Dendritic cell treated with granulocyte-macrophage colony-stimulating factor and Interleukin-4, amounts not matched to agents 40 ng/mL and 50 ng/mL, for 4 days (primary cell): ENCODE measurements at regions of chr6 and their contacts with region 1.

Region 1: DNA sequence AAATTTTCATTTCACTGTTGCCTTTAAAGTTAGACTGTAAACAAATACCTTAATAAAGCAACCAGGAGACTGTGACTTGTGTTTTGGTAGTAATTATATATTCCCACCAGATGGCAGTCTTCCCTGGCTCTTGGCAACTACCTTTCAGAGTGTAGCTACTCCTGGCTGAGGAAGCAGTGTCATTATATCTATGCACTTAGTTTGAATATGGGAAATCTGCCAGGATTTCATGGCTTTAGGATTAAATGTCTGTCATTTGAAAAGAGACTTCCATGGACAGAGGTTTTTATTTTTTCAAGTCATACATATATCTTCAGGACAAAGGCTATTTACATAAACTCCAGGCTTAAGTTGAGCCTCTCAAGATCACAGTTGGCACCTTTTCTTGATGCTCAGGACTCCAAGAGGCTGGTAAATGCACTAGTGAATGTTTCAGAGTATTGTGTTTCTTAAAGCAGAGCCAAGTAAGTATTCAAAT is 160.1 kb downstream of the C6orf58 start:
- H3K4me3 Mint-ChIP-seq: no peak overlapping the region
- H3K27ac Mint-ChIP-seq: no peak overlapping the region
- H3K4me1 Mint-ChIP-seq: no peaks in the 10 kb centered on the region
- H3K27me3 Mint-ChIP-seq: no peaks in the 10 kb centered on the region

Region 2: GRCh38 chr6:127403636-127404035 is 333.4 kb before region 1 on chr6:
- intact Hi-C with region 1: no loop called
- H3K4me3 Mint-ChIP-seq: no peak overlapping the region
- H3K27ac Mint-ChIP-seq: no peak overlapping the region
- H3K4me1 Mint-ChIP-seq: peaks cover 10% of the 10 kb centered on the region
- H3K27me3 Mint-ChIP-seq: no peaks in the 10 kb centered on the region

Region 3: DNA sequence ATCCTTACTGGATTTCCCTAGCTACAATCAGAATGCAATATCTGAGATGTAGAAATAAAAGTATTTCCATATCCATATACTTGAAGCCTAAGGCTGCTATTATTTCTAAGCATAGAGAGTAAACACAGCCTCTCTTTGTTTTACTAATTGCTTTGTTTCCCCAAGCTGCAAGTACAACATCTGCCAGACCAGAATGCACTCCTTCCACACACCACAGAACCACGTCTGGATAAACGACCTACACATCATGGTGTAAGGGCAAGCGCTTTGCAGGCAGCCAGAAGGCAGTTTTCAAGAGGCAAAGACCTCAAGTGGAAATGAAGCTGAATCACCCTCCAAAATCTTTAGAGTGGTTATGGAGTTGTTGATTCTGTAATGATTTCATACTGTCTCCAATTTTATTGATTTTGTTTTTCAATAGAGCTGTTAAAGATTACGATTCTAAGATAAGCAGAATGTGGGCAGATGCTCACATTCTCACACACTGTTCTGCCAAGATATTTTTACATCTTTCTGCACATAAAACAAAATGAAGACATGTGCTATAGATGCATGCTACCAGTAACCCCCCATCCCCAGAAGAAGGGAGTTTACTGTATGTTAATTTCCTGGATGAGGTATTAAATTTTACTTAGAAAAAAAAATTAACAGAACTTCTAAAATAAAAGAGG is 75.0 kb after region 1 on chr6:
- intact Hi-C with region 1: no loop called
- H3K4me3 Mint-ChIP-seq: no peak overlapping the region
- H3K27ac Mint-ChIP-seq: no peak overlapping the region
- H3K4me1 Mint-ChIP-seq: no peaks in the 10 kb centered on the region
- H3K27me3 Mint-ChIP-seq: no peaks in the 10 kb centered on the region

Region 4: GRCh38 chr6:128327890-128328289 is 590.8 kb after region 1 on chr6:
- intact Hi-C with region 1: loop called (anchors 1 kb)
- H3K4me3 Mint-ChIP-seq: no peak overlapping the region
- H3K27ac Mint-ChIP-seq: no peak overlapping the region
- H3K4me1 Mint-ChIP-seq: no peaks in the 10 kb centered on the region
- H3K27me3 Mint-ChIP-seq: no peaks in the 10 kb centered on the region